PC-9 (cell line): ENCODE measurements at regions of chr16 and their contacts with region 1.

Region 1: DNA sequence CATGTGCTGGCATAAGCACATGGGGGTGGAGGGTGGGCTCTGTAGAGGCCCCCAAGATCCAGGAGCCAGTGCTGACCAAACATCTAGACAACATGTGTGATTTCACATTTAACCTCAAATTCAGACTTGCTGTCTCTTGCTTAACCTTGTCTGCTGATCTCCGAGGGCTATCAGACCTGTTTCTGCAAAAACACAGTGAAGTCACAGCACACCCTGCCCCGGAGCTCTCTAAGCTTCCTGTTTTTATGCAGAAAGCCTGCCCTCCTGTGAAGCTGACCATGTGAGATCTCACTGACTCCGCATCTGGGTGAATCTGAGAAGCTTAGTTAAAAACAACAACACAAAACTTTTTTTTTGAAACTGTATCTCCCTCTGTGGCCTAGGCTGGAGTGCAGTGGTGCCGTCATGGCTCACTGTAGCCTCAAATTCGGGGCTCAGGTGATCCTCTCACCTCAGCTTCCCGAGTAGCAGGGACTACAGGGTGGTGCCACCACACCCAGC is 6.6 kb upstream of the DPEP2 start:
- DNase-seq: peak; percentile 56 to 87
- H3K4me3 ChIP-seq: no peak overlapping the region
- H3K27ac ChIP-seq: peak overlapping the region; percentile 71
- H3K4me1 ChIP-seq: peaks cover 20% of the 10 kb centered on the region
- H3K27me3 ChIP-seq: no peaks in the 10 kb centered on the region
- CTCF ChIP-seq: no peak

Region 2: GRCh38 chr16:67490335-67491096 is 515.3 kb before region 1 on chr16:
- CTCF ChIA-PET with region 1: no interaction called
- POLR2A ChIA-PET with region 1: no interaction called
- intact Hi-C with region 1: no loop called
- DNase-seq: no peak
- H3K4me3 ChIP-seq: no peak overlapping the region
- H3K27ac ChIP-seq: no peak overlapping the region
- H3K4me1 ChIP-seq: 0 out of 2 replicates have a peak, but pooled peaks cover 4% of the 10 kb centered on the region
- H3K27me3 ChIP-seq: no peaks in the 10 kb centered on the region
- CTCF ChIP-seq: no peak

Region 3: DNA sequence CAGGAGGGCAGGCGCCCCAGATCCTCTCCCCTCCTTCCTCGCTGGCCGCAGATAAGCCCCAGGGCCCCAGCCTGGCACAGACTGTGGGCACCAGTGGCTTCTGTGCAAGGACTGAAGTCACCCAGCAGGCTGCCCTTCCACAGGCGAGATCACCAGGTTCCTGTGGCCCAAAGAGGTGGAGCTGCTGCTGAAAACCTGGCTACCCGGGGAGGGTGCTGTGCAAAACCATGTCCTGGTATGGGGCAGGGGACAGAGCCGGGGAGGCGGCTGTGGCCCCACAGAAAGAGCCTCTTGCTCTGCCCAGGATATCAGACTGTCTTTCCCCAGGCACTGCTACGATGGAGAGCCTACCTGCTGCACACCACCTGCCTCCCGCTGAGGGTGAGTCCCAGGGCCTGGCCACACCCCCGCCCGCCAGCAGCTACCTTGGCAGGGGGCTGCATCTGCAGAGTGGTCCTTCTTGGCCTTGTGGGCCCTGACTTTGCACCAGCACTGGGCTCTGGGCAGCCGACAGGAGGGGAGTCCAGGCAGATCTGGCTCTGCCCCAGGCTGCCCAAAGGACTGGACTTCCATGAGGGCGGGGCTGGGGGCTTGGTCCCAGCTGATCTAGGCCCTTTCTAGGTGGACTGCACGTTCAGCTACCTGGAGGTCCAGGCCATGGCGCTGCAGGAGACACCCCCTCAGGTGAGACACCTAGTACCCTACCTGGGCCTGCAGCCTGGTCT is 360.3 kb before region 1 on chr16:
- CTCF ChIA-PET with region 1: no interaction called
- POLR2A ChIA-PET with region 1: no interaction called
- intact Hi-C with region 1: no loop called
- DNase-seq: no peak
- H3K4me3 ChIP-seq: no peak overlapping the region
- H3K27ac ChIP-seq: no peak overlapping the region
- H3K4me1 ChIP-seq: no peaks in the 10 kb centered on the region
- H3K27me3 ChIP-seq: peaks cover 5% of the 10 kb centered on the region
- CTCF ChIP-seq: no peak

Region 4: DNA sequence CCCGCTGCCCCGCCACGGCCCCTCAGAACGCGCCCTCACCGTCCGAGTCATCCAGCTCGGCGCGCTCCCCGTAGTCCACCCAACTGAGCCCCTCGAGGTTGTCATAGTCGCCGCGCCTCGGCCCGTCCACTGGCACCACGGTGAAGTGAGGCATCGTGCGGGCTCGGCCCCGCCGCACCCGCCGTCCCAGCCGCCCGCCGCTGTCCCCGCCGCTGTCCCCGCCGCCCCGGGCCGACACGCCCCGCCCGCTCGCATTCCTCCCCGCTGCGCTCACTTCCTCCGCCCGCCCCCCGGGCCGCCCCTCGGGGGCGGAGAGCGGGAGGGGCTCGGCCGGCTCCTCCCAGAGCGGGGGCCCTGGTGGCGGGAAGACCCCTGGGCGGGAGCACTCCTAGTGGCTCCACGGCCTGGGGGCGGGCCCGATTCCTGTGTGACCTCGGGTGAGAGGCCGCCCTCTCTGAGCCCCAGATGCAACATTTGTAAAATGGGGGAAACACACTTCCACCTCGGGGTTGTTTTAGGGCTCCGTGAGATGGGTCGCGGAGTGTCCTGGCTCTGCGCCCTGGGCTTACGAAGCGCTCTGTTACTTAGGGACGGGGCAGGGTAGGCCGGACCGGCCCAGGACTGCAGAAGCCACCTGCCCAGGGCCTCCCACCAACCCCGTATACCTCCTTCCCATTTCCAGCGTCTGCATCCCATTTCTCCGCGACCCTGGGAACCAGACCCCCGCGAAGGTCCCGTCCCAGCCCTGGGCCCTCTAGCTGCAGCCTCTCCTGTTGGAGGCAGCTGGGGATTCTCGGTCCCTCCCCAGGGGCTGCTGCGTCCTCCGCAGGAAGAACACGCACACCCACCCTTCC is 37.2 kb before region 1 on chr16 and contains the start of gene SLC12A4:
- CTCF ChIA-PET with region 1: no interaction called
- POLR2A ChIA-PET with region 1: interaction called, 34 read pairs
- intact Hi-C with region 1: no loop called
- DNase-seq: peak; percentile 50 to 87
- H3K4me3 ChIP-seq: peak within 1 kb of the TSS; percentile 90
- H3K27ac ChIP-seq: no peak within 1 kb of the TSS
- H3K4me1 ChIP-seq: peaks cover 10% of the 10 kb centered on the region; the same call in 1 of the 2 replicates
- H3K27me3 ChIP-seq: no peaks in the 10 kb centered on the region
- CTCF ChIP-seq: no peak
- total RNA-seq, gene SLC12A4: 24.2 and 27.0 TPM in 2 replicates

Region 5: DNA sequence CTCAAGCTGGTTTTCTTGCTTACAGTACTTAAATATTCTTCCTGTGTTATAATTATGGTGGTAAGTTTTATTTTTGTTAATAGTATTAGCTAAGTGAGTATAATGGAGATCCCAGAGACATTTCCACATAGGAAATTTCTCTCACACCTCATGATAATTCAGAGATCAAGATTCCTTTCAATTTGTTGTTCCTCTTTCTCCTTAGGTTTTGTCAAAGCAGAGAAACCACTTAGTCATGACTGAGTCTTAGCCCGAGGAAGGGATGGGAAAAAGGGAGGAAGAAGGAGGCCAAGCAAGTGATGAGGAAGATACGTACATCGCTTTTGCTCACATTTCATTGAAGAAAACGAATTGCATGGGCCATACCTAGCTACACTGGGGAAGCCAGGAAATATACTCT is 211.7 kb after region 1 on chr16:
- CTCF ChIA-PET with region 1: no interaction called
- POLR2A ChIA-PET with region 1: interaction called, 18 read pairs
- intact Hi-C with region 1: no loop called
- DNase-seq: no peak
- H3K4me3 ChIP-seq: no peak overlapping the region
- H3K27ac ChIP-seq: no peak overlapping the region
- H3K4me1 ChIP-seq: no peaks in the 10 kb centered on the region
- H3K27me3 ChIP-seq: no peaks in the 10 kb centered on the region
- CTCF ChIP-seq: no peak